Posterior cingulate gyrus (tissue), 11 donors: ENCODE measurements at regions of chr13 and their contacts with region 1.

Region 1: DNA sequence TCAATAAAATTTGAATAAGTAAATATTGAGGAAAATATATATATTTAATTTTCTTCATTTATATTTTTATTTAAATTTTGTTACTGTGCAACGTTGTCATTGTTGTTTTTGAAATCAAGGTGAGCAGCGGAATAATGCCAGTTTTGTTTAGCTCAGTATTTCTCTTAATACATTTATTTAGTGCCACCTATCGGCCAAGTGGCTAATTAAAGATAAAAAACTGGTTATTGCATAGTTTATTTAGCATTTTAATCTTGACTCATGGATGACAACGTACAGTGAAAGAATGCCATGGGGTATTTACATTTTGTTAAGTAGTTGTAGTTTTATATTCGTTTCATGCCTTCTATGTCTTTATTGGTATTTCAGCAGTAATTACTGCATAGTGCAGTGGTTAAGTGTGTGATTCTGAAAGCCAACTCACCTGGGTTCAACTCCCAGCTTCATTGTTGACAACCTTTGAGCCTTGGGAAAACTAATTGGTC is 265.9 kb downstream of the MYO16 start:
- DNase-seq: no peak

Region 2: DNA sequence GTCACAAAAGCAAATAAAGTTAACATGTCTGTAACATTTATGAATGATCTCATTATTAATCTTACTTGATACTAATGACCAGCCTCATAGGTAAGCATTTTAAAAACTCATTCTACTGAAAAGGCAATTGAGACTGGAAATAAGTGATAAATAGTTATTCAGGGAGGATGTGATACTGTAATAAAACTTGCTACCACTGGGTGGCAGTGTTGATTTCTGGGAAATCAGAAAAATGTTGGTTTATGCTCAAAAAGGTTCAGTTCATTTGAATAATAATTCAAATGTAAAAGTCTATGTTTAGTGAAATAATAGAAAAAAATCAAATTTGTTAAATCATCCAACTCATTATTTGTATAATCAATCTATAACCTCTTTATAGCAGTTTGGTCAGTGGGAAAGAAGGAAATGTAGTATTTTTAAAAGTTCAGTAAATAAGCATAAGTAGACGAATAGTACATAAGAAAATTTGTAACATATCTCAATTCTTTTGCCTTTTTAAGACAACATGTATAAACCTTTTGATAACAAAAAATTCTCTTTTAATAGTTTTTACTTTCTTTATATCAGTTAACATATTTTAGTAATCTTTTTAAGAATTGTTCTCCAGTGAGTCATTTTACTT is 667.5 kb before region 1 on chr13:
- intact Hi-C with region 1: loop called (anchors 5 kb)
- DNase-seq: no peak

Region 3: DNA sequence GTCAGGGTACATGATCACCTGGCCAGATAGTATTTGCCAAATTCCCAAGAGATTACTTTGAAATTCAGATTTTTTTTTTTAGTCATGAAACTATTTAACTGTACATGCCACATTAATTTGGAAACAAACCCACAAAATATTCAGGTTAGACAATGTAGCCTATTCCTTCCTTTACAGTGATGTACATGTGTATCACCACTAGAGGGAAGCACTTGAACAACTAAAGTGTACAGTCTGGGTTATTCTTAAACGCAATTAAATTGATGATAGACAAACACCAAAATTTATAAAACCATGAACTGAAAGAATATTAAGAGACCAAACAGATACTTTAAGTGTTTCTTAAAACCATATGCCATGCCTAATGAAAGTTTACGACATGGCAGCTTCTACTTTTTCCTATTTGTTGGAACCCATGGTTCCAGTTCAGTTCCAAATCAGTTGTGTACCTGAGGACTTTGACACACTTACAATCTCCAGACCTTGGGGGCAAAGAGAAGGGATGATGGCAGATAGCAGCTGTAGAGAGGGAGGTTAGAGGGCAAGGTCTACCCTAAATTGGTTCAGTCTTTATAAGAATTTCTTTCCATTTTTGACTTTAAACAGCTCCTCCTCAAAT is 572.9 kb before region 1 on chr13:
- intact Hi-C with region 1: loop called (anchors 2 kb)
- DNase-seq: no peak

Region 4: GRCh38 chr13:108342369-108343289 is 552.6 kb before region 1 on chr13:
- intact Hi-C with region 1: loop called (anchors 2 kb)
- DNase-seq: no peak

Region 5: DNA sequence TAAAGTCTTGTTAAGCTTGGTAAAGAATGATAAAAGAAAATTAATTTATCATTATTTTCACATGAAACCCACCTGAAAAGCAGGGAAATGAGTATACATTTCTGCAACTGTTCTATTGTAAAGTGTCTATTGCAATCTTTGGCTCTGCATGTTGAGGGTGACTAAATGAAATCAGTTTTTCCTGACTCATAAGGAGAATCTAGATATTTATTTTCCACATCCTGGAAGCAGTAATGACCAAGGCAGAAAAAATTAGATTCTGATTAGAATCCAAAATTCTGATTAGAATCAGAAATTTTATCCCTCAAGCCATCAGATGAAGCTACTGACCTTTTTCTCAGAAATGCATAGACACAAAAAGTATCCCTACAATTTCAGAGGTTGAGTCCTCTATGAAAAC is 87.4 kb before region 1 on chr13:
- intact Hi-C with region 1: no loop called
- DNase-seq: no peak